ENCODE measurements at regions of chr2 and their contacts with region 1.

Region 1: DNA sequence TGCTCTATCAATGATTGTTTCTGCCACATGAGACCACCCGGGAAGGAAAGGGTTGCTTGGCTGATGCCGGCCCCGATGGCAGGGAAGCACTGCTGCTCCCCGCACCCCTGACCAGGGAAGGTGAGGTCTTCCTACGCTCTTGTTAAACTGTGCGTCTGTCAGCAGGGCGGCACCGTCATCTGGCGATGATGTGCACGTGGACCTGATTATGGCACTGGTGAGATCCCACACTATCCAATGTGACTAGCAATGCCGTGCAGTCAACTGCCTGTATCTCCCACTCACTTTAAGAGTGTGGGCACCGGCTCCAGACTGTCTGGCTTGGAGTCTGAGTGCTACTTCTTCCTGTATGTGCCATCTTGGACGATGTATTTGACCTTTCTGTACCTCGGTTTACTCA is 209.2 kb downstream of the MYT1L start:
- DNase-seq: no peak
- H3K4me3 ChIP-seq: no peak overlapping the region
- H3K27ac ChIP-seq: no peak overlapping the region
- H3K4me1 ChIP-seq: no peaks in the 10 kb centered on the region
- H3K27me3 ChIP-seq: peaks cover 0 to 10% of the 10 kb centered on the region in 2 donors
- CTCF ChIP-seq: no peak

Region 2: DNA sequence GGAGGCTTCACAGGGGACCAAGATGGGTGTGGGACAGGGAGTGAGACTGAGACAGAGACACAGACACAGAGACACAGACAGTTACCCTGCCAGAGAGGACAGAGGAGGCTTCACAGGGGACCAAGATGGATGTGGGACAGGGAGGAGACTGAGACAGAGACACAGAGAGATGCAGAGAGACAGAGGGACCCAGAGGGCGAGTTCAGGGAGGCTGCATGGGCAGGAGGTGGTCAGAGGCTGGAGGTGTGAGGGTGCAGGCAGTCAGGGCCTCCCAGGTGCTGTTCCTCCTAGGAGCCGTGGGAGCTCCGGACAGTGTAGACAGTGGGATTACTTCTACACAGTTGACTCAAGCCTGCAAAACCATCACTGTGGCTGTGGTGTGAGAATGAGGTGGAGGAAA is 171.4 kb before region 1 on chr2:
- intact Hi-C with region 1: no loop called
- DNase-seq: no peak
- H3K4me3 ChIP-seq: no peak overlapping the region
- H3K27ac ChIP-seq: no peak overlapping the region
- H3K4me1 ChIP-seq: no peaks in the 10 kb centered on the region
- H3K27me3 ChIP-seq: peaks cover 0 to 21% of the 10 kb centered on the region in 2 donors
- CTCF ChIP-seq: no peak

Region 3: GRCh38 chr2:2409481-2409880 is 287.6 kb after region 1 on chr2:
- intact Hi-C with region 1: loop called (anchors 5 kb)
- DNase-seq: no peak
- H3K4me3 ChIP-seq: no peak overlapping the region
- H3K27ac ChIP-seq: no peak overlapping the region
- H3K4me1 ChIP-seq: no peaks in the 10 kb centered on the region
- H3K27me3 ChIP-seq: no peaks in the 10 kb centered on the region
- CTCF ChIP-seq: no peak

Measured in tibial artery (tissue), 4 donors.